PC-9 (cell line): ENCODE measurements at regions of chr17 and their contacts with region 1.

Region 1: GRCh38 chr17:29597361-29598172 is 4.6 kb downstream of the ANKRD13B start:
- DNase-seq: peak in 1 of 2 experiments; percentile 1
- H3K4me3 ChIP-seq: no peak overlapping the region
- H3K27ac ChIP-seq: no peak overlapping the region
- H3K4me1 ChIP-seq: peaks cover 19% of the 10 kb centered on the region
- H3K27me3 ChIP-seq: no peaks in the 10 kb centered on the region
- CTCF ChIP-seq: no peak

Region 2: GRCh38 chr17:29401258-29401657 is 196.3 kb before region 1 on chr17:
- CTCF ChIA-PET with region 1: no interaction called
- POLR2A ChIA-PET with region 1: no interaction called
- intact Hi-C with region 1: no loop called
- DNase-seq: no peak
- H3K4me3 ChIP-seq: no peak overlapping the region
- H3K27ac ChIP-seq: no peak overlapping the region
- H3K4me1 ChIP-seq: no peaks in the 10 kb centered on the region
- H3K27me3 ChIP-seq: no peaks in the 10 kb centered on the region
- CTCF ChIP-seq: no peak

Region 3: GRCh38 chr17:29617125-29617480 is 19.5 kb after region 1 on chr17:
- CTCF ChIA-PET with region 1: no interaction called
- POLR2A ChIA-PET with region 1: no interaction called
- intact Hi-C with region 1: no loop called
- DNase-seq: no peak
- H3K4me3 ChIP-seq: no peak overlapping the region
- H3K27ac ChIP-seq: no peak overlapping the region
- H3K4me1 ChIP-seq: peaks cover 31% of the 10 kb centered on the region
- H3K27me3 ChIP-seq: no peaks in the 10 kb centered on the region
- CTCF ChIP-seq: no peak; the same call in 1 of the 2 replicates

Region 4: DNA sequence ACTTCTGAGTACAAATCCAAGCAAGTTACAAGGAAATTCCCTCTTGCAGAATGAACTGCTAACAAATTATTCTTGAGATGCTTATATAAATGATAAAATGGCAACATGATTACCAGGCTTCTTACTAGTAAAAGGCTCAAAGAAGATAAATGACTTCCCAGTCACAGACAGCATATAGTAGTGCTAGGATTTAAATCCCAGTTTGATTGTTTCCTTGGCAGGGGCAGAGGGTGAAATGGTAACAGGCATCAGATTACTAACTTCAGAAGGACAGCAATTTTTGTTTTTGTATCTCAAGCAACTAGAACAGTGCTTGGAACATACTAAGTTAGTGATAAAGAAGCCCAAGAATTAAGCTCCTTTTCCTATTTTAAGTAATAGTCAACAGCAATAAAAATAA is 229.6 kb after region 1 on chr17:
- CTCF ChIA-PET with region 1: no interaction called
- POLR2A ChIA-PET with region 1: interaction called, 20 read pairs
- intact Hi-C with region 1: no loop called
- DNase-seq: no peak
- H3K4me3 ChIP-seq: no peak overlapping the region
- H3K27ac ChIP-seq: no peak overlapping the region
- H3K4me1 ChIP-seq: peaks cover 22% of the 10 kb centered on the region
- H3K27me3 ChIP-seq: no peaks in the 10 kb centered on the region
- CTCF ChIP-seq: no peak